ENCODE measurements at regions of chr3 and their contacts with region 1.

Region 1: DNA sequence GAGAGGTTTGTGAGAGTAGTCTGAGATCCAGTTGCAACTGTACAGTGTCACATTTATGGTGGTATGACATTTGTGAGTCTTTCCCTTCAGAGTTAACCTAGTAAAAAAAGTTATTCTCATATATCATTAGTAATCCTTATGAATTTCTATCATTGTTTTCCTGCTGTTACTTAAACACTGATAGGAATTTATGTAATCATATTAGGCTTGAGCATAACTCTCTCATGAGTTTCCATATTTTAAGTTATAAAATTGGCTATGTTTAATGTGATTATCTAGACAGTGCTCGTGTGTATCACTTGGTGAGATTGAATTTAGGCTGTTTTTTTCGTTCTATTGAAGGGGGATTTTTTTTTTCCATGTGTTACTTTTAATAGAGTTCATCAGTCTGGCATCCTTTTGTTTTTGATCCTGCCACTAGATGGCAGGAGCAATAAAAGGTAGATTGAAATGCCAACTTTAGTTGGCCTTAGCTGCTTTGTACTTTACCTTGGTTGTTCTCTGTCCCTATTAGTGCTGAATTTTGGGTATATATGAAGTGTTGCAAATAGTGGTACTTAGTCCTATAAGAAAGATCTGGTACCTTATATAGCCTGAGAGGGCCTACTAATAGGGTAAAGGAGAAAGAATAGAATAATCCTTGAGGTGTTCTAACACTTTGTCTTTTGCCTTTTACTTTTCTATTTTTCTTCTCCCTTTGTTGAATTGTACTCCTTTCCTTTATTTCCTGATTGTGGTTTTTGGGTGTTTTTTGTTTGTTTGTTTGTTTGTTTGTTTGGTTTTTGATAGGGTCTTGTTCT is 17.9 kb downstream of the STT3B start:
- DNase-seq: no peak
- ATAC-seq: peak; percentile 49
- H3K4me3 Mint-ChIP-seq: no peak overlapping the region
- H3K27ac Mint-ChIP-seq: peak overlapping the region; percentile 13
- H3K4me1 Mint-ChIP-seq: peaks cover 63% of the 10 kb centered on the region
- H3K27me3 Mint-ChIP-seq: no peaks in the 10 kb centered on the region
- CTCF ChIP-seq: no peak

Region 2: DNA sequence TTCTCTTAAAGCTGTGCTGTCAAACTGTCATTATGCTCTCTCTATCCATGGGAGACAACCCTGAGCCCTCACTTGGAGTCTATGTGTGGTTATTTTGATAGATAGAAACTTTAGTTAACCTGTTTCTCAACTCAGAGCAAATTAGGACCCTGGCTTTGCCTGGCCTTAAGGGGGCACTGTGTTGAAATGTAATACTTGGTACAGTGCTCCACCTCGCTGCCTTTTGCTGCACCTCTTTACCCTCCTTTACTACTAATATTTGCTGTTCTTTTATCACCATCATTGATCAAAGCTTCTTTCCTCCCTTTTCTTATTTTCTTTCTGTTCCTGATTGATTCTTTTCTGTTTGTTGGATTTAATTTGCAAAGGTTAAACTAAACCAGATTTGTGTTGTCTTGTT is 16.4 kb after region 1 on chr3:
- CTCF ChIA-PET with region 1: interaction called, 4 read pairs
- POLR2A ChIA-PET with region 1: no interaction called
- intact Hi-C with region 1: loop called (anchors 2 kb)
- DNase-seq: no peak
- ATAC-seq: peak; percentile 69
- H3K4me3 Mint-ChIP-seq: no peak overlapping the region
- H3K27ac Mint-ChIP-seq: no peak overlapping the region
- H3K4me1 Mint-ChIP-seq: peaks cover 83% of the 10 kb centered on the region
- H3K27me3 Mint-ChIP-seq: no peaks in the 10 kb centered on the region
- CTCF ChIP-seq: no peak

Region 3: DNA sequence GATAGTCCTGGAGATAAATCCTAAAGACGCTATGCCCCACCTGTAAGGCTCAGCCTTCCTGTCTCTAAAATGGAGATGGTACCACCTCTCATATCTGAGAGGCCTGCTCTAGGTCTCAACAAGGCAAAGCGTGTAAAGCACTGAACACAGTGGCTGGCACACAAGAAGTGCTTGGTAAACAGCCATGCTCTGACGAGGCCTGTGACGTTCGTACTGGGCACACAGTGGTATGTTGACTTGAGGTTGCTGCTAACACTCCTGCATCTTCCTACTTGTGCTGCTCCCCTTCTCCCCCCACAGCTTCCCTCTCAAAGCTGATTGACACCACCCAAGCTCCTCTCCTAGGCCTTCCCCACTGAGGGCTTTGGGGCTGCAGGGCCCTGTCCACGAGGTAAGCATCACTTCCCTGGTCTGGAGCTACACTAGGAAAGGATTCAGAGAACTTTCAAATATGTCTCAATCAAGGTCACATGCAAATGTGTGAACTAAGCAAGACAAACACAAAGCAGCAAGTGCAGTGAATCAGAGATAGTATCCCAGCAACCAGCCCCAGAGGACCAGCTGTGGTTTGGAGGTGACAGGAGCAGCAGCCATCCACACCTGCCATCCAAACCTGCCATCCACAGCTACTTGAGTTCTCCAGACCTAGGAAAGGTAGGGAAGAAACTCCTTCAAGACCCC is 159.6 kb after region 1 on chr3:
- CTCF ChIA-PET with region 1: no interaction called
- POLR2A ChIA-PET with region 1: no interaction called
- intact Hi-C with region 1: loop called (anchors 10 kb)
- DNase-seq: no peak
- ATAC-seq: peak; percentile 70
- H3K4me3 Mint-ChIP-seq: peak overlapping the region; percentile 39
- H3K27ac Mint-ChIP-seq: peak overlapping the region; percentile 67
- H3K4me1 Mint-ChIP-seq: peaks cover 87% of the 10 kb centered on the region
- H3K27me3 Mint-ChIP-seq: no peaks in the 10 kb centered on the region
- CTCF ChIP-seq: no peak

Region 4: DNA sequence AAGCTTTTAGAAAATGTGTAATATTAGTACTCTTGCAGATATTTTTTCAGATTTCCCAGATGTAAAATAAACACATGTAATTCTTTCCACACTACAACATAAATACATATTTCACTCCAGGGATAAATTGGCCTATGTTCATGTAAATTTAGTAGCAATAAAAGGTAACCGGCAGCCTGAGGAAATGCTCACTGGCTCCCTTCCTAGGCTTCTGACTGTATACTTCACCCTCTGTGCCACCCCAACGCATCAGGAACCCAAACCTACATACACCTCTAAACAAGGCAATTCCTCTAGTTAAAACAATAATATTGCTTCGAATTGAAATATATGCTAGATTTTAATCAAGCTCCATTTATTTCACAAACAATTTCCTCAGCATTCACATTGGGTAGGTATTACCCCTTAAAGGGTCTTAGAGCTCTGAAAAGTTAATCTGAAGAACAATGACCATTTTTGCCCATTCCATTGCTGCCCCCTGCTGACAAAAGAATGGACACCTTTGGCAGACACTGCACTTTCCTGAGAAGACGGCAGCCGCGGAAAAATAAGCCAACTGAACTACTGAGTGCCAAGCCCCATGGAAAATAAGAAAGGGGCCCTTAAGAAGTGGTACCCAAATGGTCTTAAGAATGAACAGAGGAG is 217.9 kb after region 1 on chr3:
- CTCF ChIA-PET with region 1: interaction called, 4 read pairs
- POLR2A ChIA-PET with region 1: no interaction called
- intact Hi-C with region 1: loop called (anchors 1 kb)
- DNase-seq: no peak
- ATAC-seq: no peak
- H3K4me3 Mint-ChIP-seq: no peak overlapping the region
- H3K27ac Mint-ChIP-seq: peak overlapping the region; percentile 37
- H3K4me1 Mint-ChIP-seq: peaks cover 68% of the 10 kb centered on the region
- H3K27me3 Mint-ChIP-seq: no peaks in the 10 kb centered on the region
- CTCF ChIP-seq: no peak